ENCODE measurements at regions of chr12 and their contacts with region 1.

Region 1: DNA sequence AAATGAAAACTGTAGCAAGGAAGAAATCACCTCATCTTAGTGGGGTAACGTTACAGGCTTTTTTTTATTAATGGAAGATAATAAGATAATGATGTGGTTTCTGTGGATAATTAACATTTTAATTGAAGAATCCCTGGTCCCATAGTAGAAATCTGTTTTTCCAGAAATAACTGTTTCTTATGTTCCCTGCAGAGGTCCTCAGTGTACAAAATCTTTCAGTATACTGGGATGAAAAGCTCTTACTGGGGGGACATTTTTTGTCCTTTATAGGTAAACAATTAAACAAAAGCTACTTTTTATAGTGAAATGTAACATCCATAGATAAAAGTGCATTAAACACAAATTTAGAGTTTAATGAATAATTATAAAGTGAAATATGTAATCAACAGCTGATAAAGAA is 312.2 kb downstream of the ATXN7L3B start:
- DNase-seq: no peak
- H3K4me3 Mint-ChIP-seq: peak overlapping the region; percentile 69
- H3K27ac Mint-ChIP-seq: peak overlapping the region; percentile 2
- H3K4me1 Mint-ChIP-seq: peaks cover 42% of the 10 kb centered on the region
- H3K27me3 Mint-ChIP-seq: no peaks in the 10 kb centered on the region
- CTCF ChIP-seq: peak; percentile 23

Region 2: GRCh38 chr12:74689071-74689655 is 160.6 kb before region 1 on chr12:
- CTCF ChIA-PET with region 1: no interaction called
- intact Hi-C with region 1: loop called (anchors 2 kb)
- DNase-seq: no peak
- H3K4me3 Mint-ChIP-seq: no peak overlapping the region
- H3K27ac Mint-ChIP-seq: no peak overlapping the region
- H3K4me1 Mint-ChIP-seq: peaks cover 11% of the 10 kb centered on the region
- H3K27me3 Mint-ChIP-seq: no peaks in the 10 kb centered on the region
- CTCF ChIP-seq: peak; percentile 54

Region 3: GRCh38 chr12:74719447-74719846 is 130.4 kb before region 1 on chr12:
- CTCF ChIA-PET with region 1: no interaction called
- intact Hi-C with region 1: no loop called
- DNase-seq: no peak
- H3K4me3 Mint-ChIP-seq: no peak overlapping the region
- H3K27ac Mint-ChIP-seq: no peak overlapping the region
- H3K4me1 Mint-ChIP-seq: peaks cover 24% of the 10 kb centered on the region
- H3K27me3 Mint-ChIP-seq: no peaks in the 10 kb centered on the region
- CTCF ChIP-seq: no peak

Region 4: DNA sequence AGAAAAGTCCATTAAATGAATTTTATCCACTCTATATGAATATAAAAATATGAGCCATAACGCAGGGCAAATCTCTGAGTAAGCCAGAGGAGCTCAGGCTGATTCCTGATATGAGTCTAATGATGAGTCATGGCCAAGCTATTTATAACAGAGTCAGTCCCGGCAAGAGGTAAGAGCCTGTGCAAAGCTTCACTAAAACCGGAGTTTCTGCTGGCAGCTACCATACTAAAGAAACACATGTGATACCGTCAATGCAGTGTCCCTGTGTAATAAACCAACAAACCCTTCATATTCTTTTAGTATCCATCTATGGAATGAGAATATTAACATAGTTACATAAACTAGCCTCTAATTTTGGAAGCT is 40.4 kb after region 1 on chr12:
- CTCF ChIA-PET with region 1: no interaction called
- intact Hi-C with region 1: loop called (anchors 2 kb)
- DNase-seq: peak; percentile 52
- H3K4me3 Mint-ChIP-seq: peak overlapping the region; percentile 33
- H3K27ac Mint-ChIP-seq: peak overlapping the region; percentile 68
- H3K4me1 Mint-ChIP-seq: peaks cover 36% of the 10 kb centered on the region
- H3K27me3 Mint-ChIP-seq: no peaks in the 10 kb centered on the region
- CTCF ChIP-seq: no peak

Region 5: DNA sequence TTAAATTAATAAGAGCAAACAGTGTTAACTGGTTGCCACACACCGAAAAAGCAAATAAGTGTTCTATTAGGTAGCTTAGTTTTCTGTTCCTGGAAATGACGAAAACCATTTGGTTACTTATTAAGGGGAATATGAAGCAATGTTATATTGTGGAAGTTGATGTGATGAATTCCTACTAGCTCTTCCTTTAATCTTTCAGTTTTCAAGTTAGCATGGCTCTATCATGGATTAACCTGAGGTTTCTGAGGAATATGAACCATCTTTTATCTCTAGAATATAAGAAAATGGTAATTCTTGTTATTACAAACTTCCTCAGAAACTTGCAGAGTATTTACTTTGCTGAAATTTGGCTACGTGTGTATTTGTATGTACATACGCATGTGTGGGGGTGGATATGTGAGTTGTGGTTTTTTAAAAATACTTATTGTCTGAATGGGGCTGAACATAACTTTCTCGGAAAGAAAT is 114.1 kb after region 1 on chr12:
- CTCF ChIA-PET with region 1: interaction called, 5 read pairs
- intact Hi-C with region 1: loop called (anchors 2 kb)
- DNase-seq: no peak
- H3K4me3 Mint-ChIP-seq: peak overlapping the region; percentile 13
- H3K27ac Mint-ChIP-seq: peak overlapping the region; percentile 91
- H3K4me1 Mint-ChIP-seq: peaks cover 20% of the 10 kb centered on the region
- H3K27me3 Mint-ChIP-seq: no peaks in the 10 kb centered on the region
- CTCF ChIP-seq: no peak

Region 6: DNA sequence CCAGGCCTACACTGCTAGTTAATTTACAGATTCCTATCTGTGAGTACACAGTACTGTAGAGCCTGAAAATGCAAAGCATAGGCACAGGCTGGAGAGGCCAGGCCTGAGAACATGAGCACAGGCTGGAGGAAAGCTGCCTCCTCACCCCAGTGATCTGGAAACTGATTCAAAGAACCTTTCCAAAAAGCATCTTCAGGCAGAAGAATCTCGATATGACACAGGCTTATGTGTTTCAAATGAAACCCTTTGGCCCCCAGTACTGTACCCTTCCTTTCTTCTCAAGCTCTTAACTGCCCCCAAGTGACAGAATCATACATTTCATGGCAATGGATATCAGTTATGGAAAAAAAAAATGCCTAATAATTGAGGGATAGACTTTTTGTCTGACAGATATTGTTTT is 237.9 kb after region 1 on chr12:
- CTCF ChIA-PET with region 1: no interaction called
- intact Hi-C with region 1: loop called (anchors 5 kb)
- DNase-seq: peak; percentile 20
- H3K4me3 Mint-ChIP-seq: no peak overlapping the region
- H3K27ac Mint-ChIP-seq: no peak overlapping the region
- H3K4me1 Mint-ChIP-seq: no peaks in the 10 kb centered on the region
- H3K27me3 Mint-ChIP-seq: no peaks in the 10 kb centered on the region
- CTCF ChIP-seq: peak; percentile 30

Measured in Calu3 (cell line).